ENCODE measurements at regions of chr17 and their contacts with region 1.

Region 1: DNA sequence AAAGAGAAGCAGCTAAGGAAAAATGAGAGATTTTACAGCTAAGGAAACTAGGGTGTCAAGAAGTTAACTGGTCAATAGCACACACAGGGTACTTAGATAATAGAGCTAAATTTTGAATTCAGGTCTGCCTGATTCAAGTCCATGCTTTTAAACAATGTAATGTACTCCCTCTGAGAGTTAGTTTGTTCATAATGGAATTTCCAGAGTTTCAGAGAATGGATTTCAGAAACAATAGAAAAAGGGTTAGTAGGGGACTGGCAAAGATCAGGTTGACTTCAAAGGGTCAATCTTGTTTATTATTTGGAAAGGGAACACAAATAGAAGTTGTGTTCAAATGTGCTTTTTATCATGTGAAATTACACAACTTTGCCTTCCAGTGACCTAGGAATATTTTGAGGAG is 17.9 kb downstream of the NSRP1 start:
- DNase-seq: no peak
- H3K4me3 Mint-ChIP-seq: no peak overlapping the region
- H3K27ac Mint-ChIP-seq: no peak overlapping the region
- H3K4me1 Mint-ChIP-seq: no peaks in the 10 kb centered on the region
- H3K27me3 Mint-ChIP-seq: no peaks in the 10 kb centered on the region
- CTCF ChIP-seq: no peak

Region 2: GRCh38 chr17:30173649-30174048 is 39.1 kb after region 1 on chr17:
- CTCF ChIA-PET with region 1: interaction called, 3 read pairs
- intact Hi-C with region 1: loop called (anchors 5 kb)
- DNase-seq: no peak
- H3K4me3 Mint-ChIP-seq: no peak overlapping the region
- H3K27ac Mint-ChIP-seq: no peak overlapping the region
- H3K4me1 Mint-ChIP-seq: peaks cover 28% of the 10 kb centered on the region
- H3K27me3 Mint-ChIP-seq: no peaks in the 10 kb centered on the region
- CTCF ChIP-seq: no peak